GM13976 (cell line): ENCODE measurements at regions of chr18 and their contacts with region 1.

Region 1: GRCh38 chr18:79246348-79247108 is 149.2 kb upstream of the NFATC1 start:
- DNase-seq: peak; percentile 87
- CTCF ChIP-seq: peak; percentile 94

Region 2: DNA sequence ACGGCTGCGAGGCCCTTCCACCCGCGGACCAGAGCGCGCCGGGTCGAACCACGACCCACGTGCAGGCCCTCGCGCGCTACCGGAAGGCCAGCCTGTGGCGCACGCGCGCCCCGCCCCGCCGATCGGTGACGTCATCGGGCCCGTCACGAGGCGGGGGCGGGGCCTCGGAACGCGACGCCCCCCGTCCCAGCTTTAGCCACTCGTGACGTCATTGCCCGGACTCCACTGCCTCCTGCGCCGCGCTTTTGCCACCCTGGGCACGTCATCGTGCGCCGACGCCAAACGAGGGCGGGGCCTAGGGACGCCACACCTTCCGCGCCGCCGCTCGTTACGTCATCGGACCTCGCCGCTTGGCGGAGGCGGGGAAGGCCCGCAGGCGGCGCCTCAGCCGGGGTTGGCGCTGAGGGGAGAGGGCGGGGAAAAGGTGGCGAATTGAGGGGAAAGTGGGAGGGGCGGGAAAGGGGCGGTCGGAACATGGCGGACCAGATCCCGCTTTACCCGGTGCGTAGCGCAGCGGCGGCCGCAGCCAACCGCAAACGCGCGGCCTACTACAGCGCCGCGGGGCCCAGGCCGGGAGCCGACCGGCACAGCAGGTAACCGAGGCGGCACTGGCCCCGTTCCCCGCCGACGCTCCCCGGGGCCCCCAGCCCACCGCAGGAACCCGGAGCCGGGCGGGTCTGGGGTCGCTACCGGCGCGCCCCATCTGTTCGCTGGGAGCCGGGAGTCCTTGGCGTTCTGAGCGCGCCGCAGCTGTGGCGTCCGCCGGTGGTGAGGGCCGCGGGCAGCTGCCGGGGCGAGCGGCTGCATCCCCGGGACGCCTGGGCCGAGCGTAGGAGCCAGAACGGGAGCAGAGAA is 177.4 kb before region 1 on chr18 and contains the start of gene ATP9B:
- in situ Hi-C with region 1: loop called (anchors 25 kb)
- DNase-seq: peak; percentile 98
- CTCF ChIP-seq: no peak